ENCODE measurements at regions of chr6 and their contacts with region 1.

Region 1: DNA sequence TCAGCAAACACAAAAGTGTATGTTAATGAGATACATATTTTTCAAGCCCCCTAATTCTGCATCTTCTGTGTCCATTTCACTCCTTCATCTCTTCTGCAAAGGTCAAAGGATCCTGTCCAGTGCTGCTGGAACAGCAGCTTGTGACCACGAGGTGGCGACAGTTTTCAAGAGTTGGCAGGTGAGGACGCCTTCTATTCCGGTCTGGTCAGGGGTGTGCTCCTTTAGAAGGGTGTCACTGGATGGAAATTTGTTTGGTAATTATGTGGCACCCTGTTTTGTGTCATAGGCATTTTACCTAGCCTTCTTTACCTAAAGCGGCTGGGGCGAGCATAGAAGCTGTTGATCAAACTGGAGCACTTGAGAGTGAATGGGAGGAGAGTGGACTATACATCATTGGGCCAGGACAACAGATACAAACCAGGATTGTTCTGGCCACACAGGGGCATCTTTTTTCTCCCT is 32.9 kb upstream of the ERVFRD-1 start:
- DNase-seq: peak; percentile 70
- H3K4me3 ChIP-seq: no peak overlapping the region
- H3K27ac ChIP-seq: no peak overlapping the region
- H3K4me1 ChIP-seq: no peaks in the 10 kb centered on the region
- H3K27me3 ChIP-seq: no peaks in the 10 kb centered on the region
- CTCF ChIP-seq: peak; percentile 86 to 95
- POLR2A ChIP-seq: no peak

Region 2: GRCh38 chr6:10163200-10163962 is 981.0 kb before region 1 on chr6:
- CTCF ChIA-PET with region 1: no interaction called
- POLR2A ChIA-PET with region 1: no interaction called
- dilution Hi-C with region 1: no loop called
- intact Hi-C with region 1: no loop called
- DNase-seq: no peak
- H3K4me3 ChIP-seq: no peak overlapping the region
- H3K27ac ChIP-seq: no peak overlapping the region
- H3K4me1 ChIP-seq: no peaks in the 10 kb centered on the region
- H3K27me3 ChIP-seq: no peaks in the 10 kb centered on the region
- CTCF ChIP-seq: no peak
- POLR2A ChIP-seq: no peak

Region 3: DNA sequence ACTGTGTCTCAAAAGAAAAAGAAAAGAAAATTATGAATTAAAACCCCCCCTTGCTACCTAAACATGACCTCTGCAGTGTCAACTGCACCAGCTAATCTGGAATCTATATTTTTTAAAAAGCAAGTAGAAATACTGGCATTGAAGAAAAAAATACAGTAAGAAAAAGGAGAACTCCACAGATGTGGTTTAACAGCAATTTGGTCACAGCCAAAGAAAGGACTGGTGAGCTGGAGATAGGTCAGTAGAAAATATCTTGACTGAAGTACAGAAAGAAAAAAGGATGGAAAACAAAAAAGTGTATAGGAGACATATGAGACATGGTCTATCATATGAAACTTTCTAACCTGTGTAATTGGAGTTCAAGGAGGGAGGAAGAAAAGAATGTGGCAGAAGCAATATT is 11.2 kb after region 1 on chr6:
- CTCF ChIA-PET with region 1: interaction called, 11 read pairs
- POLR2A ChIA-PET with region 1: no interaction called
- dilution Hi-C with region 1: no loop called
- intact Hi-C with region 1: no loop called
- DNase-seq: no peak
- H3K4me3 ChIP-seq: no peak overlapping the region
- H3K27ac ChIP-seq: no peak overlapping the region
- H3K4me1 ChIP-seq: no peaks in the 10 kb centered on the region
- H3K27me3 ChIP-seq: no peaks in the 10 kb centered on the region
- CTCF ChIP-seq: no peak
- POLR2A ChIP-seq: no peak

Region 4: GRCh38 chr6:11172501-11173332 is 28.3 kb after region 1 on chr6:
- CTCF ChIA-PET with region 1: interaction called, 4 read pairs
- POLR2A ChIA-PET with region 1: no interaction called
- dilution Hi-C with region 1: no loop called
- intact Hi-C with region 1: loop called (anchors 1 kb)
- DNase-seq: peak; percentile 71
- H3K4me3 ChIP-seq: no peak overlapping the region
- H3K27ac ChIP-seq: no peak overlapping the region
- H3K4me1 ChIP-seq: no peaks in the 10 kb centered on the region
- H3K27me3 ChIP-seq: no peaks in the 10 kb centered on the region
- CTCF ChIP-seq: peak; percentile 78 to 82
- POLR2A ChIP-seq: no peak

Region 5: GRCh38 chr6:11393713-11394627 is 249.5 kb after region 1 on chr6:
- CTCF ChIA-PET with region 1: no interaction called
- POLR2A ChIA-PET with region 1: no interaction called
- dilution Hi-C with region 1: no loop called
- intact Hi-C with region 1: no loop called
- DNase-seq: no peak
- H3K4me3 ChIP-seq: no peak overlapping the region
- H3K27ac ChIP-seq: no peak overlapping the region
- H3K4me1 ChIP-seq: peaks cover 28% of the 10 kb centered on the region
- H3K27me3 ChIP-seq: peaks cover 0 to 5% of the 10 kb centered on the region in 2 experiments
- CTCF ChIP-seq: no peak
- POLR2A ChIP-seq: no peak